CD8-positive, alpha-beta T cell (primary cell): ENCODE measurements at regions of chr19 and their contacts with region 1.

Region 1: DNA sequence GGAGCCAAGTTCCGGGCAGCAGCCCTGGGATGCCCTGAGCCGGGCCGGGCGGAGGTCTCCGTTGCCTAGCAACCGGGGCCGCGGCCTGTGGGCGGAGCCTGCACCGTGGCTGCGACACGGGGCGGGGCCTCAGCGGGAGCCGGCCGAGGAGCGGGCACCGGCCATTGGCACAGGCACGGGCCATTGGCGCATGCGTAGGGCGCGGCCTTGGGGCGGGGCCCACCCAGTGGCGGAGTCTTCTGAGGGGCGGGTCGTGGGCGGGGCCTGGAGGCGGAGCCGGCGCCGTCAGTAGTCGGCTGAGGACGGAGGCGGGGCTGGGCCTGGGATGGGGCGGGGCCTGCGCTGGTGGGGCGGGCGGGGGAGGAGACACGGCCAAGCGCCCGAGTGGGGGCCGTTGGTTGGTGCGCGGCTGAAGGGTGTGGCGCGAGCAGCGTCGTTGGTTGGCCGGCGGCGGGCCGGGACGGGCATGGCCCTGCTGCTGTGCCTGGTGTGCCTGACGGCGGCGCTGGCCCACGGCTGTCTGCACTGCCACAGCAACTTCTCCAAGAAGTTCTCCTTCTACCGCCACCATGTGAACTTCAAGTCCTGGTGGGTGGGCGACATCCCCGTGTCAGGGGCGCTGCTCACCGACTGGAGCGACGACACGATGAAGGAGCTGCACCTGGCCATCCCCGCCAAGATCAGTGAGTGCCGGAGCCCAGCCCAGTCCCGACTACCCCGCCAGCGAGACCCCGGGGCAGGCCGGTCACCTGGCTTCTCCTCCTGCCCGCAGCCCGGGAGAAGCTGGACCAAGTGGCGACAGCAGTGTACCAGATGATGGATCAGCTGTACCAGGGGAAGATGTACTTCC is at the start of gene IZUMO4:
- DNase-seq: peak; percentile 98 to 100 (median 100)
- ATAC-seq: peak; percentile 78
- H3K4me3 ChIP-seq: peak within 1 kb of the TSS; percentile 82 to 88
- H3K4me3 Mint-ChIP-seq: peak within 1 kb of the TSS; percentile 92
- H3K27ac ChIP-seq: peak within 1 kb of the TSS; percentile 80 to 87
- H3K27ac Mint-ChIP-seq: peak within 1 kb of the TSS; percentile 93
- H3K4me1 ChIP-seq: peaks cover 46% of the 10 kb centered on the region
- H3K4me1 Mint-ChIP-seq: peaks cover 31% of the 10 kb centered on the region
- H3K27me3 ChIP-seq: no peaks in the 10 kb centered on the region
- H3K27me3 Mint-ChIP-seq: no peaks in the 10 kb centered on the region
- CTCF ChIP-seq: peak; percentile 49
- total RNA-seq, gene IZUMO4: 11.9 to 15.3 TPM

Region 2: DNA sequence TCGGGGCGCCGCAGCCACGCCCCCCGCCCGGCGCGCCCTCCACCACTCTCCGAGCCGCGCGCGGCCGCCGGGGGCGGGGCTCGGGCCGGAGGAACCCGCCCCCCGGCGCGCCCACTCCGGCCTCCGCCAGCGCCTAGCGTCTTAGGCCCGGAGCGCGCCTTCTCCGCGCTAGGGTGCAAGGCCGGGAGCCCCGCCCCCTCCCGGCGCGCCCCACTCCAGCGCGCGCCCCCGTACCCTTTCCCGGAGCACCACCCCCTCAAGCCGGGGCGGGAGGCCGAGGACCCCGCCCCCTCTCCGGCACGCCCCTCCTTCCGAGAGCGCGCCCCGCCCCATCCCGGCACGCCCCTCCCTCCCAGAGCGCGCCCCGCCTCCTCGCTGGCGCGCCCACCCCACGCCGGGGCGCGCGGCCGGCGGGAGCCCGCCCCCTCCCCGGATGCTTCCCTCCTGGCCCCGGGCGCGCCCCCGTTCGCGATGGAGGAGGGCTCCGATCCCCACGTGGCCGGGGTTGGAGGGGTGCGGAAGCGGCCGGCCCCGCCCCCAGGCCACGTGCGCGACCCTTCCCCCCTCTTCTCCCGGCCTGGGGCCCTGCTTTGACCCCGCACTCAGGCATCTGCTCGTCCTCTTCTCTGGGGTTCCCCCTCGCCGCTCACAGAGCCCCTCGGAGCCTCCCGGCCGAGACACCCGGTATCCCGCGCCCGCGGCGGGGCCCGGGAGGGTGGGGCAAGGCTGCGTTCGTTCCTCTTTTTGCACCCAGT is 232.8 kb before region 1 on chr19:
- CTCF ChIA-PET with region 1: no interaction called
- POLR2A ChIA-PET with region 1: no interaction called
- intact Hi-C with region 1: loop called (anchors 1 to 2 kb)
- DNase-seq: peak; percentile 80 to 96 (median 94)
- ATAC-seq: peak; percentile 71
- H3K4me3 ChIP-seq: peak overlapping the region; percentile 84 to 96
- H3K4me3 Mint-ChIP-seq: peak overlapping the region; percentile 80
- H3K27ac ChIP-seq: peak overlapping the region; percentile 71 to 83
- H3K27ac Mint-ChIP-seq: peak overlapping the region; percentile 57
- H3K4me1 ChIP-seq: peaks cover 42% of the 10 kb centered on the region
- H3K4me1 Mint-ChIP-seq: peaks cover 34% of the 10 kb centered on the region
- H3K27me3 ChIP-seq: no peaks in the 10 kb centered on the region
- H3K27me3 Mint-ChIP-seq: no peaks in the 10 kb centered on the region
- CTCF ChIP-seq: no peak

Region 3: GRCh38 chr19:2021453-2022140 is 75.1 kb before region 1 on chr19:
- CTCF ChIA-PET with region 1: interaction called, 13 read pairs
- POLR2A ChIA-PET with region 1: no interaction called
- intact Hi-C with region 1: loop called (anchors 1 to 2 kb)
- DNase-seq: no peak
- ATAC-seq: no peak
- H3K4me3 ChIP-seq: no peak overlapping the region
- H3K4me3 Mint-ChIP-seq: no peak overlapping the region
- H3K27ac ChIP-seq: no peak overlapping the region
- H3K27ac Mint-ChIP-seq: no peak overlapping the region
- H3K4me1 ChIP-seq: peaks cover 3% of the 10 kb centered on the region
- H3K4me1 Mint-ChIP-seq: peaks cover 3% of the 10 kb centered on the region
- H3K27me3 ChIP-seq: no peaks in the 10 kb centered on the region
- H3K27me3 Mint-ChIP-seq: no peaks in the 10 kb centered on the region
- CTCF ChIP-seq: no peak

Region 4: GRCh38 chr19:2061495-2062381 is 35.0 kb before region 1 on chr19:
- CTCF ChIA-PET with region 1: no interaction called
- POLR2A ChIA-PET with region 1: interaction called, 7 read pairs
- intact Hi-C with region 1: loop called (anchors 1 kb)
- DNase-seq: peak; percentile 99 to 100 (median 99)
- ATAC-seq: peak; percentile 94
- H3K4me3 ChIP-seq: peak overlapping the region; percentile 73 to 80
- H3K4me3 Mint-ChIP-seq: peak overlapping the region; percentile 91
- H3K27ac ChIP-seq: peak overlapping the region; percentile 91 to 96
- H3K27ac Mint-ChIP-seq: peak overlapping the region; percentile 95
- H3K4me1 ChIP-seq: peaks cover 52% of the 10 kb centered on the region
- H3K4me1 Mint-ChIP-seq: peaks cover 44% of the 10 kb centered on the region
- H3K27me3 ChIP-seq: no peaks in the 10 kb centered on the region
- H3K27me3 Mint-ChIP-seq: no peaks in the 10 kb centered on the region
- CTCF ChIP-seq: no peak

Region 5: DNA sequence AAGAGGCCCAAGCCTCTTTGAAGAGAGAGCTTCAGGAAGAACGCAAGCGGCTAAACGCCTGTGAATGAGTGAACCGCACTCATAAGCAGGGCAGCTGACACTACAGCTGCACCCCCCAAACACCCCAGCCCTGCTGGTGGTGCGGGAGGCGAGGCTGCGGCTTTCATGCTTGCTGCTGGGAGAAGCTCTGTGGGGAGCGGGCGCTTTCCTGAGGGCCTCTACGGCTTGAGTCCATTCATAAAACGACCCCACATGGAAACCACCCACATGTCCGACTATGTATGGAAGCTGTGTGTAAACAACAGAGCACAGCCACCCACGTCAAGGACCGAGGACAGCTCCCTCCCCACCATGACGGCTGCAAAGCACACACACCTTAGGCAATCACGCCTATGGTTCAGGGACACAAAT is 49.1 kb after region 1 on chr19:
- CTCF ChIA-PET with region 1: no interaction called
- POLR2A ChIA-PET with region 1: no interaction called
- intact Hi-C with region 1: loop called (anchors 1 kb)
- DNase-seq: peak in 5 of 9 experiments; percentile 16 to 62 (median 42)
- ATAC-seq: peak; percentile 76
- H3K4me3 ChIP-seq: no peak overlapping the region
- H3K4me3 Mint-ChIP-seq: peak overlapping the region; percentile 6
- H3K27ac ChIP-seq: no peak overlapping the region
- H3K27ac Mint-ChIP-seq: peak overlapping the region; percentile 41
- H3K4me1 ChIP-seq: peaks cover 39% of the 10 kb centered on the region
- H3K4me1 Mint-ChIP-seq: peaks cover 50% of the 10 kb centered on the region
- H3K27me3 ChIP-seq: no peaks in the 10 kb centered on the region
- H3K27me3 Mint-ChIP-seq: no peaks in the 10 kb centered on the region
- CTCF ChIP-seq: no peak

Region 6: DNA sequence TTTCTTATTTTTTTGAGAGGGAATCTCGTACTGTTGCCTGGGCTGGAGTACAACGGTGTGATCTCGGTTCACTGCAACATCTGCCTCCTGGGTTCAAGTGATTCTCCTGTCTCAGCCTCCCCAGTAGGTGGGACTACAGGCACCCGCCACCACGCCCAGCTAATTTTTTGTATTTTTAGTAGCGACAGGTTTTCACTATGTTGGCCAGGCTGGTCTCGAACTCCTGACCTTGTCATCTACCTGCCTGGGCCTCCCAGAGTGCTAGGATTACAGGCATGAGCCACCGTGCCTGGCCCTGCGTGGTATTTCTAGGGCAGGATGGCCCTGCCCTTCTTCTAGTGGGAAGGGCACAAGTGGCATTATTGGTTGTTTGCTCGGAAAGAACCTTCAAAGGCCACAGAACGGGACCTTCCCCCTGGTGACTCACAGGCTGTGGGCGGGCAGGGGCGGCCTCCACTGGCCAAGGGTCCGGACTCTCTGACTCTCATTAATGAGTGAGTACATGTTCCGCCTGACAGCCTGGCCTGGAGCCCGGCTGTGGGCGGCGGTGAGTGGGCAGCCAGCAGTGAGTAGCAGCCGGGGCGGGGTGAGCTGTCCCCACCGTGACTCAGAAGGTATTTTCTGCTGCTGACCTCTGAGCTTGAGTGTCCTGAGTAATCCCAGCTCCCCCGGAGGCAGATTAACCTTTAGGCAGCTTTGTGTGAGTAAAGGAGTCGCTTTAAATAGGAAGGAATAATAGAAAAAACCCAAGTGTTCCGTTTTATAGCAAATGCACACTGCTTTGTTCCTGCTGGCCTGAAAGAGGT is 72.1 kb after region 1 on chr19:
- CTCF ChIA-PET with region 1: no interaction called
- POLR2A ChIA-PET with region 1: no interaction called
- intact Hi-C with region 1: no loop called
- DNase-seq: peak in 8 of 9 experiments; percentile 15 to 79 (median 40)
- ATAC-seq: peak; percentile 4
- H3K4me3 ChIP-seq: no peak overlapping the region
- H3K4me3 Mint-ChIP-seq: no peak overlapping the region
- H3K27ac ChIP-seq: peak overlapping the region in 1 of 2 experiments; percentile 63
- H3K27ac Mint-ChIP-seq: peak overlapping the region; percentile 37
- H3K4me1 ChIP-seq: peaks cover 45% of the 10 kb centered on the region
- H3K4me1 Mint-ChIP-seq: peaks cover 43% of the 10 kb centered on the region
- H3K27me3 ChIP-seq: peaks cover 0 to 2% of the 10 kb centered on the region in 2 experiments
- H3K27me3 Mint-ChIP-seq: no peaks in the 10 kb centered on the region
- CTCF ChIP-seq: no peak

Region 7: GRCh38 chr19:2269244-2269947 is 172.7 kb after region 1 on chr19:
- CTCF ChIA-PET with region 1: no interaction called
- POLR2A ChIA-PET with region 1: no interaction called
- intact Hi-C with region 1: loop called in 1 of 2 experiments (anchors 1 kb)
- DNase-seq: peak; percentile 98 to 100 (median 99)
- ATAC-seq: peak; percentile 80
- H3K4me3 ChIP-seq: peak overlapping the region; percentile 82 to 98
- H3K4me3 Mint-ChIP-seq: peak overlapping the region; percentile 91
- H3K27ac ChIP-seq: peak overlapping the region; percentile 80 to 86
- H3K27ac Mint-ChIP-seq: peak overlapping the region; percentile 92
- H3K4me1 ChIP-seq: peaks cover 45% of the 10 kb centered on the region
- H3K4me1 Mint-ChIP-seq: peaks cover 35% of the 10 kb centered on the region
- H3K27me3 ChIP-seq: no peaks in the 10 kb centered on the region
- H3K27me3 Mint-ChIP-seq: no peaks in the 10 kb centered on the region
- CTCF ChIP-seq: no peak

Region 8: DNA sequence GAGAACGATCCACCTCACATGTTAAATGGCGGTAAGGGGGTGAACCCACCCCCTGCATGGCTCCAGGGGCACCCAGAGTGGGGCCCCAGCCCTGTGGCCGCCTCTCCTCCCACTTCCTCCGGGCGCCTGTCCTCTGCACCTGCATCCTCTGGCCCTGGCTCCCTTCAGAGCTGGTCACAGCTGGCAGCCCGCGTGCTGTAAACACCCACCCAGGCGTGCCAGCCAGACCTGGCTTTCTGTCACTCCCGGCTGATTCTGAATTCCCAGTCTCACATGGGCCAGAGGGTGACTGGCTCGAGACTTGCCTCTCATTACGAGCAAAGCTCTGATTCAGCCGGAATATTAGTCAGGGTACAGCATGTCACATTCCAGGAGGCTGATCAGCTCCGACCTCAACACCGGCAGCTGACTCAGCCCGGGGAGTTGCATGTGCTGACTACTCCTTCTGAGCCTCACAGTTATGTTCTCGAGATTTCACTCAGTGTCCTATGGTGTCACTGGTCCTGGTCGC is 530.7 kb after region 1 on chr19:
- CTCF ChIA-PET with region 1: no interaction called
- POLR2A ChIA-PET with region 1: no interaction called
- intact Hi-C with region 1: no loop called
- DNase-seq: peak in 2 of 9 experiments; percentile 28 to 45
- ATAC-seq: peak; percentile 35
- H3K4me3 ChIP-seq: no peak overlapping the region
- H3K4me3 Mint-ChIP-seq: no peak overlapping the region
- H3K27ac ChIP-seq: no peak overlapping the region
- H3K27ac Mint-ChIP-seq: peak overlapping the region; percentile 55
- H3K4me1 ChIP-seq: peaks cover 28% of the 10 kb centered on the region
- H3K4me1 Mint-ChIP-seq: peaks cover 46% of the 10 kb centered on the region
- H3K27me3 ChIP-seq: no peaks in the 10 kb centered on the region
- H3K27me3 Mint-ChIP-seq: no peaks in the 10 kb centered on the region
- CTCF ChIP-seq: no peak